ENCODE measurements at regions of chr2 and their contacts with region 1.

Region 1: DNA sequence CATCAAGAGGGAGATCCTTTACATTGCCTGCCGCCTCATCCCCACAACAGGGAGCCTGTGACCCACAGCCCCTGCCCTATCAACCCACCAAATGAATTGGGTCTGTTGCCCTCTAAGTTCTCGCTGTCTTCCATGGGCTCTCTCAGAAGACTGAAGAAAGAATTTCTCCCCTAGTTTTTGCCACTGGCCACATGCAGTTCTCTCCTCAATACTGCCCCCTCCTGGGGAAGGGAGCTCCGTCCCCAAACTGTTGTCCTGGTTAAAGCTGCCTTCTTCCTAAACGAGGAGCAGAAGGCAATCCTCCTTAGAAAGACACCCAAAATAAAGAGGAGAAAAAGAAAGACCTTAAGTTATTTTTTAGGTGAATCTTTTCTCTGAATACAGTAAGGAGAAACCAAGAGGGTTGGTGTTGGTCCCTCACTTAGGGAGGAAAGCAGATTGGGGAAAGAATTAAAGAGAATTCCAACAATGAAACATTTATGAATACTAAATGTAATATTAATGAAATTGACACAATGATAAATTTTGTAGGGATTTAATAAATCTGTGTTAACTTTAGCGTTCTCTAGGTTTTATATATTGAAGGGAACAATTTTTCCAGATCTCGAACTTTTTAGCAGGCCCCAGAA is 31.1 kb upstream of the SATB2 start:
- DNase-seq: peak; percentile 61
- H3K4me3 ChIP-seq: no peak overlapping the region
- H3K27ac ChIP-seq: no peak overlapping the region
- H3K4me1 ChIP-seq: no peaks in the 10 kb centered on the region
- H3K27me3 ChIP-seq: no peaks in the 10 kb centered on the region
- CTCF ChIP-seq: peak; percentile 79 to 81
- POLR2A ChIP-seq: no peak

Region 2: GRCh38 chr2:198374375-198375082 is 1114.4 kb before region 1 on chr2:
- CTCF ChIA-PET with region 1: interaction called, 72 read pairs
- POLR2A ChIA-PET with region 1: no interaction called
- dilution Hi-C with region 1: no loop called
- intact Hi-C with region 1: loop called (anchors 1 kb)
- DNase-seq: peak; percentile 48
- H3K4me3 ChIP-seq: no peak overlapping the region
- H3K27ac ChIP-seq: no peak overlapping the region
- H3K4me1 ChIP-seq: no peaks in the 10 kb centered on the region
- H3K27me3 ChIP-seq: no peaks in the 10 kb centered on the region
- CTCF ChIP-seq: peak; percentile 34 to 66
- POLR2A ChIP-seq: no peak

Region 3: GRCh38 chr2:199405241-199405640 is 83.6 kb before region 1 on chr2:
- CTCF ChIA-PET with region 1: interaction called, 4 read pairs
- POLR2A ChIA-PET with region 1: no interaction called
- dilution Hi-C with region 1: no loop called
- intact Hi-C with region 1: loop called (anchors 1 kb)
- DNase-seq: peak; percentile 11
- H3K4me3 ChIP-seq: no peak overlapping the region
- H3K27ac ChIP-seq: no peak overlapping the region
- H3K4me1 ChIP-seq: no peaks in the 10 kb centered on the region
- H3K27me3 ChIP-seq: no peaks in the 10 kb centered on the region
- CTCF ChIP-seq: peak; percentile 19 to 20
- POLR2A ChIP-seq: no peak

Region 4: GRCh38 chr2:199471443-199472057 is 17.3 kb before region 1 on chr2:
- CTCF ChIA-PET with region 1: interaction called, 41 read pairs
- POLR2A ChIA-PET with region 1: no interaction called
- dilution Hi-C with region 1: no loop called
- intact Hi-C with region 1: no loop called
- DNase-seq: peak; percentile 36
- H3K4me3 ChIP-seq: no peak overlapping the region
- H3K27ac ChIP-seq: no peak overlapping the region
- H3K4me1 ChIP-seq: no peaks in the 10 kb centered on the region
- H3K27me3 ChIP-seq: peaks cover 60 to 68% of the 10 kb centered on the region in 2 experiments
- CTCF ChIP-seq: peak; percentile 72 to 94
- POLR2A ChIP-seq: no peak